Sigmoid colon (tissue), 7 donors: ENCODE measurements at regions of chr15 and their contacts with region 1.

Region 1: DNA sequence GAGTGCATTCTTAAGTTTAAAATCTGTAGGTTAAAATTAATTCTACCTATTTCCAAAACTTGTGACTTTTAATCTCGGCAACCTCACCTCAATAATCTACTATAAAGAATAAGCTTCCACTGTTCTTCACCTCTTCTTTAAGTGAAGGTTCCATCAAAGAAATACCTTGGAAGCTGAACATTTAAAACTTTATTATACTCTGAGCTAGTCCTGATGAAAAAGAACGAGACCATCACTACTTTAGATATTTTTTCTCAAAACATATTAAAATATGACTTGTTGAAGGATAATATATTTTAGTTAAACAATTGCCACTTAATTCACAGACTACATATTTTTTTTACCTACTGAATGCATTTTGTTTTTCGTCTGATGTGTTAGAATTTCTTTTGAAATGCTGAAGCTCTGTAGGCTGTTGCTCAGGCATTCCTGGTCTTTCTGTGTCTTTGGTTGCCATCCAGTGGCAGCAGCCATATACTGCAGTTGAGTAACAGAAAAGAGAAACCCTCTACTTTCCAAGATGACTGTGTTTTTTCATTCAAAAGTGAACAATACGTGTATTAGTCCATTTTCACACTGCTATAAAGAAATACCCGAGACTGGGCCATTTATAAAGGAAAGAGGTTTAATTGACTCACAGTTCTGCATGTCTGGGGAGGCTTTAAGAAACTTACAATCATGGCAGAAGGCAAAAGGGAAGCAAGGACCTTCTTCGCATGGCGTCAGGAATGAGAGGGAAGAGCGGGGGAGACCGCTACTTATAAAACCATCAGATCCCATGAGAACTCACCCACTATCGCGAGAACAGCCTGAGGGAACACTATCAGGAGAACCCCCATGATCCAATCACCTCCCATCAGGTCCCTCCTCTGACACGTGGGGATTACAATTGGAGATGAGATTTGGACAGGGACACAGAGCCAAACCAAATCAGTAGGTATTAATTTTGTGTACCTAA is 4.5 kb upstream of the GOLGA8B start:
- DNase-seq: peak; percentile 84
- H3K4me3 ChIP-seq: peak overlapping the region in 2 of 4 donors; percentile 32 to 36
- H3K27ac ChIP-seq: peak overlapping the region; percentile 42 to 55 (median 48)
- H3K4me1 ChIP-seq: peaks cover 0 to 12% (median 7%) of the 10 kb centered on the region in 4 donors
- H3K27me3 ChIP-seq: no peaks in the 10 kb centered on the region
- CTCF ChIP-seq: peak; percentile 65 to 77 (median 73)
- EP300 ChIP-seq: no peak
- POLR2A ChIP-seq: peak in 1 of 2 donors; percentile 23

Region 2: DNA sequence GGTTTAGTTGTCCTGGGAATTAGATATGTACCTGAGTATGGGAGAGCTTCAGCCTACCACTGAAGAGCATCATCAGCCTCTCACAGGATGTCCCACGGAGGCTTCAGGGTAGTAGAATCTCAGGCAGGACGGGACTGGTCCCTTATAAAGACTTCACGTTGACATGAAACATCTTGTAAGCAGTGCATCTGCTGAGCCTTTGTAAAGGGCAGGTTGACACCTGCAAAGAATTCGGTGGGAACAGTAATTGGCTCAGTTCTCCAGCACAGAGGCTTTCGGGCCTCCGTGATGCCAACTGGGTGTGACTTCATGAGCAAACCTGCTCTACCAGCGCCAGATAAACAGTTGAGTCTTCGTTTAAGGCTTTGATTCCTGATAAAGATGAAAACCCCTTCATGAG is 522.1 kb before region 1 on chr15:
- intact Hi-C with region 1: loop called (anchors 10 kb)
- DNase-seq: no peak
- H3K4me3 ChIP-seq: no peak overlapping the region
- H3K27ac ChIP-seq: no peak overlapping the region
- H3K4me1 ChIP-seq: peaks cover 0 to 6% (median 2%) of the 10 kb centered on the region in 4 donors
- H3K27me3 ChIP-seq: no peaks in the 10 kb centered on the region
- CTCF ChIP-seq: no peak
- EP300 ChIP-seq: no peak
- POLR2A ChIP-seq: no peak

Region 3: DNA sequence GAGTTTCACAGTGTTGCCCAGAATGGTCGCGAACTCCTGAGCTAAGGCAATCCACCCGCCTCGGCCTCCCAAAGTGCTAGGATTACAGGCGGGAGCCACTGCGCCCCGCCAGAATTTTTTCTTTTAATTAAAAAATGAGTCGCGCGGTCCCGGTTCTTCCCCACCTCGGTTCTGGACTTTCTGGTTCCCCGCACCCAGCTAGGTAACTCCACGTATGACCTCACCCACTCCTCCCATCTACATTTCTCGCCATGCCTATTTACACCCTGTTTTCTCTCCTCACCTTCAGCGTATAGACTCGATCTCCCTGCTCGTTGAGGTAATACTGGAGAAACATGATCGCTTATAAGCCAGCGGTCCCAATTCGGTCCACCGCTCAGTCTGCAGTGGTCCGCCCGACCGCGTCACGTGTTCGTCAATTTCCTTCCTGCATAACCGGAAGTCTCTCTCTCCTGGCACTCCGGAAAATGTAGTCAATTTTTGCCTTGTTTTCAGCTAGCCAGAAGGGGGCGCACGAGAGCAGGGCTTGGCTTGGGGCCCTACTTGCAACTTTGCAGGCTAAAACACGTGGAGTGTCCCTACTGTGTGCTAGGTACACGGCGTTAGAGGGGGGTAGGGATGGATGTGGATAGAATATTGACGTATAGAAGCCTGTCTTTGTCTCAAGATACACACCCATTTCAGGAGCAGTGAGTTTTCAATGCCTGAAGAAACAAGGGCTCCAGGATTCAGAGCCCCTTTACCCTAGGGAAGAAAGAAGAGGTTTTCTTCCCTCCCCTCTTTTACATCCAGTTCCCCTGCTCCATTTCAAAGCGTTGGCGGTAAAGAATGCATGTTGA is 245.0 kb before region 1 on chr15 and contains the starts of genes NOP10 and NUTM1:
- intact Hi-C with region 1: loop called (anchors 1 kb)
- DNase-seq: peak; percentile 94
- H3K4me3 ChIP-seq: peak within 1 kb of the TSS; percentile 53 to 70 (median 67)
- H3K27ac ChIP-seq: peak within 1 kb of the TSS; percentile 84 to 87 (median 86)
- H3K4me1 ChIP-seq: peaks cover 0 to 17% (median 11%) of the 10 kb centered on the region in 4 donors
- H3K27me3 ChIP-seq: no peaks in the 10 kb centered on the region
- CTCF ChIP-seq: peak; percentile 91 to 98 (median 96)
- EP300 ChIP-seq: no peak
- POLR2A ChIP-seq: peak; percentile 61 to 71
- total RNA-seq, gene NOP10: 67.6 to 160 (median 118) TPM
- total RNA-seq, gene NUTM1: not detected

Region 4: DNA sequence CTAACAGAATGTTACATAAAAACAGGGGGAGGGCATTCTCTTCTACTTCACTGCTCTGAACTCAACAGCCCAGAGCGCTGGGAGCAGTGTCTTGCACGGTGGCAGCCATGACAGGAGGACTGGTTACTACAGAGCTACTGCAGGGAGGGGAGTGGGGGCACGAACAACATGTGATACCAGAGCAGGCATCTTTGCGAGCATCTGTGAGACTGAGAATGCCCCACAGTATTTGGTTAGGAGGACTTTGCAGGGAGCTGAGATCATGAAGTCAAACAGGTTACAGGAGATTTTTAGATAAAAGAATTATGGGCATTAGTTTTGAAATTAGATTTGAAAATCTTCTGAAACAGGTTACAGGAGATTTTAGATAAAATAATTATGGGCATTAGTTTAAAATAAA is 54.3 kb after region 1 on chr15:
- intact Hi-C with region 1: no loop called
- DNase-seq: no peak
- H3K4me3 ChIP-seq: no peak overlapping the region
- H3K27ac ChIP-seq: no peak overlapping the region
- H3K4me1 ChIP-seq: no peaks in the 10 kb centered on the region
- H3K27me3 ChIP-seq: no peaks in the 10 kb centered on the region
- CTCF ChIP-seq: no peak
- EP300 ChIP-seq: no peak
- POLR2A ChIP-seq: no peak